ENCODE measurements at regions of chr1 and their contacts with region 1.

Region 1: GRCh38 chr1:27192039-27192529 is 37.2 kb upstream of the SLC9A1 start:
- DNase-seq: no peak
- H3K4me3 ChIP-seq: no peak overlapping the region
- CTCF ChIP-seq: no peak
- POLR2A ChIP-seq: no peak

Region 2: GRCh38 chr1:25572708-25573600 is 1619.1 kb before region 1 on chr1:
- intact Hi-C with region 1: no loop called
- DNase-seq: no peak
- H3K4me3 ChIP-seq: no peak overlapping the region
- CTCF ChIP-seq: peak in 1 of 3 donors; percentile 6
- POLR2A ChIP-seq: no peak

Region 3: GRCh38 chr1:27031235-27032118 is 160.6 kb before region 1 on chr1:
- intact Hi-C with region 1: no loop called
- DNase-seq: peak; percentile 76 to 94
- H3K4me3 ChIP-seq: no peak overlapping the region
- CTCF ChIP-seq: no peak
- POLR2A ChIP-seq: no peak

Region 4: DNA sequence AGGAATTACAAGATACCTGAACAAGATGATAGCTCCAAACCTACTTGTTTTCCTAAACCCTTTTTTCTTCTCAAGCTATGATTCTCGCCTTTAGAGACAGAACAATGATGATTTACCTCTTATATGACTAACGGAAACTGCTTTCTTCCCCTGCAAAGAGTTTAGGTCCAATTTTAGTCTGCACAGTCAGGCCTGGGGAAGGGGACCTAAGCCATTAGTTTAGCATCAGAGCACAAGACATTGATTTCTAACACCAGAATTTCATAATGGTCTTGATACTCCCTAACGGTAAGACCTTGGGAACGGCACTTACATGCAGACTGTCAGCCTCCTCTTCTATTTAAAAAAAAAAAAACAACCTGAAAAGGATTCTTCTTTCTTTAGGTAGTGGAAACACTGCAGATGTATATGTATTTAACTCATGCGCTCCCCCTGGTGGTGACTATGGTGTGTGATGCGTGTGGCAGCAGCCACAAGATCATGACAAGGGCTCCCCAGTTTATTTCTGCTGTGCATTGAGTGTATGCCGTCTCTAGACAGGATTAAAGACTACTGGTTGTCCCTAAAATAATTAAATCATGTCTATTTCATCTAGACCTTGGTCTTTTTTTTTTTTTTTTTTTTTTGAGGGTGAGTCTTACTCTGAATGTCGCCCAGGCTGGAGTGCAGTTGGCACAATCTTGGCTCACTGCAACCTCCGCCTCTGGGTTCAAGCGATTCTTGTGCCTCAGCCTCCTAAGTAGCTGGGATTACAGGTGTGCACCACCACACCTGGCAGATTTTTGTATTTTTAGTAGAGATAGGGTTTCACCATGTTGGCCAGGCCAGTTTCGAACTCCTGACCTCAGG is 92.6 kb after region 1 on chr1:
- intact Hi-C with region 1: loop called (anchors 5 kb)
- DNase-seq: peak; percentile 83 to 92
- H3K4me3 ChIP-seq: no peak overlapping the region
- CTCF ChIP-seq: peak in 1 of 3 donors; percentile 35
- POLR2A ChIP-seq: no peak

Measured in lower leg skin (tissue), 4 donors.